H1 (cell line): ENCODE measurements at regions of chr10 and their contacts with region 1.

Region 1: GRCh38 chr10:70925377-70926225 is 37.2 kb upstream of the PCBD1 start:
- DNase-seq: peak; percentile 17 to 91
- H3K4me3 ChIP-seq: no peak overlapping the region
- H3K27ac ChIP-seq: no peak overlapping the region
- H3K4me1 ChIP-seq: no peaks in the 10 kb centered on the region
- H3K27me3 ChIP-seq: no peaks in the 10 kb centered on the region; a peak in 1 of 7 replicates
- CTCF ChIP-seq: peak; percentile 89 to 95 (median 91)
- EP300 ChIP-seq: no peak
- POLR2A ChIP-seq: no peak
- RAD21 ChIP-seq: peak; percentile 95 to 96

Region 2: DNA sequence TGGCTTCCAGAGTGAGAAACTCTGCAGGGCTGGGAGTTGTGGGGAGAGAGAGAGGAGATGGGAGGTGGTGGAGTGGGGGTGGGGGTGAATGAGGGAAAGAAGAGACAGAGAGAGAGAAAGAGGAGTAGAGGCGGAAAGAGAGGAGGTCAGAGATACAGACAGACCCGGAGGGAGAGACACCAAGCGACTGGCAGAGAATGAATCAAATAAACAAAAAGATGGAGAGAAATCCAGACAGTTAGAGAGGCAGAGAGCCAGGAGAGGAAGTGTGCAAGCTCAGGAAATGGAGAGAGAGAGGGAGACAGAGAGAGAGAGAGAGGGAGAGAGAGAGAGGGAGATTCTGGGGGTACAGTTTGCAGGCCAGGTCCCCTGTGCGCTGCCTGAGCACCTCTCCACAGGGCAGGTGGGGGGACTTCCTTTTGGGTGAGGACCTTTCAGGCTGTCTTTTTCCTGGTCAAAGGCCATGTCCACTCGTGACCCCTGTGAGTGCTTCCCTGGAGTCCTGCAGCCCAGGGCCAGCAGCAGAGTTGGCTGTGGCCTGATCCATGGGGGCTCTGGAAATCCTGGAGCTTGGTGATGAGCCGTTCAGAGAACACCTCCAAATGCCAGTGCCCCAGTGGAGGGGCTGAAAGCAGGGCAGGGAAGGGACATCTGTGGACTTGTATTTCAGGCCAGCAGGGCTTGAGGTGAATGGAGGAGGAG is 12.3 kb before region 1 on chr10:
- CTCF ChIA-PET with region 1: interaction called, 237 read pairs
- POLR2A ChIA-PET with region 1: no interaction called
- DNase-seq: no peak
- H3K4me3 ChIP-seq: no peak overlapping the region
- H3K27ac ChIP-seq: no peak overlapping the region
- H3K4me1 ChIP-seq: no peaks in the 10 kb centered on the region; a peak in 1 of 7 replicates
- H3K27me3 ChIP-seq: no peaks in the 10 kb centered on the region
- CTCF ChIP-seq: no peak
- EP300 ChIP-seq: no peak
- POLR2A ChIP-seq: no peak
- RAD21 ChIP-seq: no peak

Region 3: GRCh38 chr10:70956029-70956759 is 30.6 kb after region 1 on chr10:
- CTCF ChIA-PET with region 1: interaction called, 17 read pairs
- POLR2A ChIA-PET with region 1: no interaction called
- DNase-seq: no peak
- H3K4me3 ChIP-seq: no peak overlapping the region
- H3K27ac ChIP-seq: no peak overlapping the region
- H3K4me1 ChIP-seq: no peaks in the 10 kb centered on the region
- H3K27me3 ChIP-seq: no peaks in the 10 kb centered on the region; a peak in 1 of 7 replicates
- CTCF ChIP-seq: peak; percentile 59 to 82 (median 74)
- EP300 ChIP-seq: no peak
- POLR2A ChIP-seq: no peak
- RAD21 ChIP-seq: peak; percentile 69 to 77

Region 4: GRCh38 chr10:71075086-71075758 is 149.6 kb after region 1 on chr10:
- CTCF ChIA-PET with region 1: interaction called, 11 read pairs
- POLR2A ChIA-PET with region 1: no interaction called
- DNase-seq: no peak
- H3K4me3 ChIP-seq: no peak overlapping the region
- H3K27ac ChIP-seq: no peak overlapping the region
- H3K4me1 ChIP-seq: peaks cover 3 to 27% (median 11%) of the 10 kb centered on the region in 4 experiments; a peak in 6 of 7 replicates
- H3K27me3 ChIP-seq: no peaks in the 10 kb centered on the region; a peak in 2 of 7 replicates
- CTCF ChIP-seq: no peak
- EP300 ChIP-seq: no peak
- POLR2A ChIP-seq: no peak
- RAD21 ChIP-seq: no peak

Region 5: GRCh38 chr10:71212318-71213126 is 286.9 kb after region 1 on chr10 and contains the start of gene UNC5B:
- CTCF ChIA-PET with region 1: interaction called, 58 read pairs
- POLR2A ChIA-PET with region 1: no interaction called
- DNase-seq: peak; percentile 50 to 96
- H3K4me3 ChIP-seq: peak within 1 kb of the TSS; percentile 65 to 91 (median 78)
- H3K27ac ChIP-seq: no peak within 1 kb of the TSS
- H3K4me1 ChIP-seq: peaks cover 22 to 51% (median 27%) of the 10 kb centered on the region in 4 experiments
- H3K27me3 ChIP-seq: peaks cover 1 to 31% (median 23%) of the 10 kb centered on the region in 4 experiments
- CTCF ChIP-seq: peak; percentile 51 to 64 (median 58)
- EP300 ChIP-seq: no peak
- POLR2A ChIP-seq: peak in 1 of 2 experiments; percentile 60; a peak in 1 of 3 replicates
- RAD21 ChIP-seq: peak; percentile 6 to 40; a peak in 3 of 4 replicates
- total RNA-seq, gene UNC5B: 31.8 and 31.9 TPM in 2 replicates

Region 6: DNA sequence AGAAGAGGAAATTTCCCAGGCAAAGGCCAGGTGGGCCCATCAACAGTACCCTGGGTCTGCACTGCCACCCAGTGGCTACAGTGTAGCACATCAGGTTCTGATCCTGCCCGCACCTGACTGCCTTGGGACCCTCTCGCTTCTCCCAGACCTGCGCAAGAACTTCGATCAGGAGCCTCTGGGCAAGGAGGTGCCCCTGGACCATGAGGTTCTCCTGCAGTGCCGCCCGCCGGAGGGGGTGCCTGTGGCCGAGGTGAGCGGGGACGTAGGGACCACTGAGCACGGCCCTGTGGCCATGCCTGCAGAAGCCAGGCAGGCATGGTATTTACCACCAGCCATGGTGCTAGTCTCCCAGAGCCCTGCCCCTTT is 359.6 kb after region 1 on chr10:
- CTCF ChIA-PET with region 1: interaction called, 54 read pairs
- POLR2A ChIA-PET with region 1: no interaction called
- DNase-seq: peak in 1 of 2 experiments; percentile 85
- H3K4me3 ChIP-seq: no peak overlapping the region
- H3K27ac ChIP-seq: no peak overlapping the region
- H3K4me1 ChIP-seq: no peaks in the 10 kb centered on the region
- H3K27me3 ChIP-seq: no peaks in the 10 kb centered on the region
- CTCF ChIP-seq: peak; percentile 80 to 85 (median 85)
- EP300 ChIP-seq: no peak
- POLR2A ChIP-seq: no peak
- RAD21 ChIP-seq: peak; percentile 91